ENCODE measurements at regions of chr16 and their contacts with region 1.

Region 1: GRCh38 chr16:20944861-20945574 is 44.4 kb downstream of the LYRM1 start:
- DNase-seq: no peak
- ATAC-seq: no peak
- H3K4me3 ChIP-seq: no peak overlapping the region
- H3K27ac ChIP-seq: no peak overlapping the region
- H3K4me1 ChIP-seq: no peaks in the 10 kb centered on the region
- H3K27me3 ChIP-seq: no peaks in the 10 kb centered on the region

Region 2: DNA sequence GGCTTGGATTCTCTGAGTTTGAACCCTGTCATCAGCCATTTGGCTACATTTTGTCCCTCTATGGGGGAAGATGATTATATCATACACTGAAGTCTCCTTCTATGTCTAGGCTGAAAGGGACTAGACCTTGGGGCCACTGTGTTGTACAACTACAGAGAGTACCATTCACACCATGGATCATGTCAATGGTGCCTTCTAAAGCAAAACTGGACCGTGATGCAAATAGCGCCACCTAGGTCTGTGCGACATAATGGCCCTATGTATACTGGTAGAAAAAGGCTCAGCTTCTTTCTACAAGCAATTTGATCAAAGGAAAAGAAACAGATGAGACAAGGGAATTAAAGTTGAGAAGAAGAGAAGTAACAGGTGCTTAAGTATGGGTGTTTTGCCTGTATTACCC is 56.2 kb after region 1 on chr16:
- intact Hi-C with region 1: loop called in 1 of 2 experiments (anchors 10 kb)
- DNase-seq: no peak
- ATAC-seq: no peak
- H3K4me3 ChIP-seq: no peak overlapping the region
- H3K27ac ChIP-seq: no peak overlapping the region
- H3K4me1 ChIP-seq: no peaks in the 10 kb centered on the region
- H3K27me3 ChIP-seq: no peaks in the 10 kb centered on the region

Region 3: GRCh38 chr16:22924492-22924891 is 1979.5 kb after region 1 on chr16:
- intact Hi-C with region 1: no loop called
- DNase-seq: no peak
- ATAC-seq: no peak
- H3K4me3 ChIP-seq: no peak overlapping the region
- H3K27ac ChIP-seq: no peak overlapping the region
- H3K4me1 ChIP-seq: no peaks in the 10 kb centered on the region
- H3K27me3 ChIP-seq: no peaks in the 10 kb centered on the region